ENCODE measurements at regions of chr5 and their contacts with region 1.

Region 1: DNA sequence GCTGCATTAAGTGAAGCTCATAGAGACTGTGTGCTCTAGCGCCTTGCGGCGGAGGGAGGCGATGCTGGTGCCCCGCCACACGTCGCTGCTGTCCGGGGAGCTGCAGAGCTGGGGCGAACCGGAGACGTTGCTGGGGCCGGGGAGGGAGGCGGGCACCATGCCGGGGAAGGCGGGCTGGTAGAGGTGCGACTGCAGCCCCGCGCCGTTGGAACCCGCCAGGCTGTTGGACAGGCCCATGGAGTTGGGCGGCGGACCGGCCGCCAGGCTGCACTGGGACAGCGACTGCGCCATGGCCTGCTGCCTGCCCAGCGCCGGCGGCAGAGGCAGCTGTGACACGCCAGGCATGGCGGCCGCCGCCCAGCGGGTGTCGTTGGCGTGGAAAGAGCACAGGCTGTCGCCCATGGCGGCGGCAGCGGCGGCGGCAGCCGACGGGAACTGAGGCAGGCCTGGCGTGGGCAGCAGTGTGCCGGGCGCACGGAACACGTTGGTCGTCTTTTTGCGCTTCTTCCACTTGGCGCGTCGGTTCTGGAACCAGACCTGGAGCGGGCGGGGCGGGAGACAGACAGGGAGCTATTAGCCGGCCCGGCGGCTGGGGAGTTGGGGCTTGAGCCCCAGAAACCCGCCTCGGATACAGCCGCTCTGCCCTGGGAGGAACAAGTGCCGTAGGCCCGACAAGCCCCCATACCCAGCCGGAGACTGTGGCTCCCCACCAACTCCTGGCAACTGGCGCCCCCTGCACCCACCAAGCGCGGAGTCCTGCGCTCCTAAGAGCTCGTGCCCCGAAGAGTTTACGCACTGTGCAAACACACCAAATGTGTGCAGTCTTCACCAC is 8.0 kb downstream of the OTP start:
- DNase-seq: no peak
- ATAC-seq: peak; percentile 87
- H3K4me3 ChIP-seq: peak overlapping the region; percentile 76
- H3K27ac ChIP-seq: peak overlapping the region; percentile 78
- H3K4me1 ChIP-seq: no peaks in the 10 kb centered on the region; the same call in 1 of the 2 replicates
- H3K27me3 ChIP-seq: peaks cover 0 to under 1% of the 10 kb centered on the region in 2 experiments; a peak in 1 of 4 replicates
- CTCF ChIP-seq: peak; percentile 30 to 57 (median 56); a peak in 5 of 6 replicates
- EP300 ChIP-seq: no peak
- POLR2A ChIP-seq: peak; percentile 90
- RAD21 ChIP-seq: peak; percentile 30; the same call in 1 of the 2 replicates

Region 2: GRCh38 chr5:77155179-77155785 is 475.2 kb before region 1 on chr5:
- CTCF ChIA-PET with region 1: no interaction called
- POLR2A ChIA-PET with region 1: no interaction called
- RAD21 ChIA-PET with region 1: no interaction called
- SMC1A ChIA-PET with region 1: no interaction called
- in situ Hi-C with region 1: no loop called
- intact Hi-C with region 1: no loop called
- DNase-seq: no peak
- ATAC-seq: no peak
- H3K4me3 ChIP-seq: no peak overlapping the region
- H3K27ac ChIP-seq: no peak overlapping the region
- H3K4me1 ChIP-seq: no peaks in the 10 kb centered on the region
- H3K27me3 ChIP-seq: no peaks in the 10 kb centered on the region; a peak in 1 of 4 replicates
- CTCF ChIP-seq: no peak
- EP300 ChIP-seq: no peak
- POLR2A ChIP-seq: no peak
- RAD21 ChIP-seq: no peak

Region 3: GRCh38 chr5:77518304-77518703 is 112.2 kb before region 1 on chr5:
- CTCF ChIA-PET with region 1: interaction called, 5 read pairs
- POLR2A ChIA-PET with region 1: no interaction called
- RAD21 ChIA-PET with region 1: interaction called, 11 read pairs
- SMC1A ChIA-PET with region 1: interaction called, 3 read pairs
- in situ Hi-C with region 1: no loop called
- intact Hi-C with region 1: no loop called
- DNase-seq: no peak
- ATAC-seq: no peak
- H3K4me3 ChIP-seq: no peak overlapping the region
- H3K27ac ChIP-seq: no peak overlapping the region
- H3K4me1 ChIP-seq: no peaks in the 10 kb centered on the region
- H3K27me3 ChIP-seq: no peaks in the 10 kb centered on the region
- CTCF ChIP-seq: peak in 2 of 3 experiments; percentile 20 to 48; a peak in 3 of 6 replicates
- EP300 ChIP-seq: no peak
- POLR2A ChIP-seq: no peak
- RAD21 ChIP-seq: peak; percentile 62

Region 4: DNA sequence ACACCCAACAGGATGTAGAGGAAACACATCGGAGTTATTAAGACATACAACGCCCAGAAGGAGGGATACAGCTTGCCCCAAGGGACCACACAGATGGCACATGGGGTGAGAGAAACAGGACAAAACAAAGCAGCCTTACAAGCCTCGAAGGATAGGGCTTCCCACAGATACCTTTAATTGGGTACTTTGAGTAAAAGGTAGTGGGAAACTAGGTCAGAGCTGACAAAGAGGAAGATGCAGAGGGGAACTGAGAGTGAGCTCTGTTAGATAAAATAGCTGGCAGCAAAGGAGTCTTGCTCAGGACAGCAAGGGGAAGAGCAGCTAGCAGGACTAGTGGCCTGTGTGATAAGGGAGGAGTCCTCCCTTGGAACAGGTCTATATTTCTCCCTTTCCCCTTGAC is 40.1 kb before region 1 on chr5:
- CTCF ChIA-PET with region 1: interaction called, 9 read pairs
- POLR2A ChIA-PET with region 1: interaction called, 13 read pairs
- RAD21 ChIA-PET with region 1: interaction called, 47 read pairs
- SMC1A ChIA-PET with region 1: interaction called, 30 read pairs
- in situ Hi-C with region 1: no loop called
- intact Hi-C with region 1: loop called (anchors 1 kb)
- DNase-seq: peak; percentile 98
- ATAC-seq: peak; percentile 99
- H3K4me3 ChIP-seq: no peak overlapping the region
- H3K27ac ChIP-seq: no peak overlapping the region
- H3K4me1 ChIP-seq: no peaks in the 10 kb centered on the region
- H3K27me3 ChIP-seq: no peaks in the 10 kb centered on the region
- CTCF ChIP-seq: no peak
- EP300 ChIP-seq: peak in 1 of 2 experiments; percentile 77; a peak in 3 of 4 replicates
- POLR2A ChIP-seq: no peak
- RAD21 ChIP-seq: no peak

Region 5: DNA sequence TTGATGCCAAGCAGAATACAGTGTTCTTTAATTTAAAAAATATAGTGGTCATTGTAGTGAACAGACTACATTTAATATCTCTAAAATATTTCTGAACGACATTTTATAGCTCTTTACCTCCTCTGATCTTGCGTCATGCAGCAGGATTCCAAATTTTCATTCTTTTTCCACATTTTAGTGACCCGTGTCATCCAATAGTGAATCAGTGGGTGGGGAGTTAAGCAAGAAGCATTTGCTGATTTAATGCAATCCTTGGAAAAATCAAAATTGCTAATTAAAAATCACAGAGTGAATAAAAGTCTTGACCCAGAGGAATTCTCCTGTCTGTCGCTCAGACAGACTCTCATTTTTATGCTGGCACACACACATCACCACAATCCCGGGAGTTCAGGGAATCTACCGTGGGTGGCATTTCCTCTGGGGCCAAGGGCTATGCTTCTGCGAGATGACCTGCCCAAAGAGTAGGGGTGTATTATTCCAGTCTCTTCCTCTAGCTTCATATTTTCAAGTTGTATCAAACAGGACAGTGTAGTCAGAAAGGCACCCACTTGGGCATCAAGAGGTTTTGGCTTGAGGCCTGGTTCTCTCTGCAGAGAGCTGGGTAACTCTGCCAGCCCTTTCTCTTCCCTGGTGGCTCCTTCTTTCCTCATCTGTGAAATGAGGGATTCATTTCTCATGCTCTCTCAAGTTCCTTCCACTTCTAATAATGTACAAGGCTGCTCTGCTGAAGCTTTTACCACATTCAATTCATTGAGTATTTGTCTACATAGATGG is 32.8 kb after region 1 on chr5:
- CTCF ChIA-PET with region 1: interaction called, 4 read pairs
- POLR2A ChIA-PET with region 1: interaction called, 9 read pairs
- RAD21 ChIA-PET with region 1: interaction called, 14 read pairs
- SMC1A ChIA-PET with region 1: interaction called, 8 read pairs
- in situ Hi-C with region 1: no loop called
- intact Hi-C with region 1: no loop called
- DNase-seq: no peak
- ATAC-seq: peak; percentile 40
- H3K4me3 ChIP-seq: no peak overlapping the region
- H3K27ac ChIP-seq: no peak overlapping the region
- H3K4me1 ChIP-seq: no peaks in the 10 kb centered on the region
- H3K27me3 ChIP-seq: no peaks in the 10 kb centered on the region
- CTCF ChIP-seq: no peak
- EP300 ChIP-seq: no peak
- POLR2A ChIP-seq: no peak
- RAD21 ChIP-seq: no peak

Region 6: DNA sequence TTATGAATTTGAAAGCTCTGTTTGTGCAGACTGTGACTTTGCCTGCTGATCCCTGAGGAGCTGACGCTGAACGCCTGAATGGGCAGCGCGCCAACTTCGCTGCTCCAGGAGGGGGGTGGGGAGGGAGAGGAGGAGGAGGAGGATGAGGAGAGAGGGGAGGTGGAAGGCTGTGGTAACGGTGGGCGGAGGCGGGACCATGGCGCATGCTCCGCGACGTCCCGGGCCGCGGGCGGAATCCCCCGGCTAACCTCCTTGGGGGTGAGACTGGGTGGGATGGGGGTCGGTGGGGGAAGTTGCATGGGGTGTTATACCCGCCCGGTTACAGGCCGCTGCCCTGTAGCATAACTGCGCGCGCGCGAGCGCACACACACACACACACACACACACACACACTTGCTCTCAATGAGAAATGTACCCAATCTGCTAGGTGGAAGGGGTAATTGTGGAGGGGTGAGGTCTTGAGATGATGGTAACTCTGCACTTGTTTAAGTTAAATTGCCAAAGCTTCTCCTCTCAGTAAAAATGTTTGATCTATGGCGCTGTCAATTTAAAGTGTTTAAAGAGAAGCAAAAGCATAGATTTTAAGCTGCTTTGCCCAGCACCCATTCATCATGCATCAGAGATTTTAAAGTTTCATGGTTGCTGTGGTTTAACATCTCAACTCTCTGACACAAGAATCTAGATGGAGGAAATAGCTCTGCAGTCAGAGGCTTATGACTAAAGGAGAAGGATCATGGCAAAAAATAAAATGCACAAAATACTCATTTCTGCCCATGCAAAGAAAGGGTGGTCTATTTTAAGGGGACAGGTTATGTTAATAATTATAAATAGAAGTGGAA is 222.3 kb after region 1 on chr5:
- CTCF ChIA-PET with region 1: no interaction called
- POLR2A ChIA-PET with region 1: interaction called, 4 read pairs
- RAD21 ChIA-PET with region 1: interaction called, 11 read pairs
- SMC1A ChIA-PET with region 1: no interaction called
- in situ Hi-C with region 1: no loop called
- intact Hi-C with region 1: loop called (anchors 5 kb)
- DNase-seq: peak; percentile 80
- ATAC-seq: peak; percentile 94
- H3K4me3 ChIP-seq: peak overlapping the region; percentile 76
- H3K27ac ChIP-seq: peak overlapping the region; percentile 78
- H3K4me1 ChIP-seq: peaks cover 3% of the 10 kb centered on the region; the same call in 1 of the 2 replicates
- H3K27me3 ChIP-seq: no peaks in the 10 kb centered on the region
- CTCF ChIP-seq: no peak
- EP300 ChIP-seq: 0 out of 4 replicates have a peak, but pooled peaks have one; percentile 18 to 30
- POLR2A ChIP-seq: peak; percentile 59
- RAD21 ChIP-seq: no peak; the same call in 1 of the 2 replicates

Region 7: DNA sequence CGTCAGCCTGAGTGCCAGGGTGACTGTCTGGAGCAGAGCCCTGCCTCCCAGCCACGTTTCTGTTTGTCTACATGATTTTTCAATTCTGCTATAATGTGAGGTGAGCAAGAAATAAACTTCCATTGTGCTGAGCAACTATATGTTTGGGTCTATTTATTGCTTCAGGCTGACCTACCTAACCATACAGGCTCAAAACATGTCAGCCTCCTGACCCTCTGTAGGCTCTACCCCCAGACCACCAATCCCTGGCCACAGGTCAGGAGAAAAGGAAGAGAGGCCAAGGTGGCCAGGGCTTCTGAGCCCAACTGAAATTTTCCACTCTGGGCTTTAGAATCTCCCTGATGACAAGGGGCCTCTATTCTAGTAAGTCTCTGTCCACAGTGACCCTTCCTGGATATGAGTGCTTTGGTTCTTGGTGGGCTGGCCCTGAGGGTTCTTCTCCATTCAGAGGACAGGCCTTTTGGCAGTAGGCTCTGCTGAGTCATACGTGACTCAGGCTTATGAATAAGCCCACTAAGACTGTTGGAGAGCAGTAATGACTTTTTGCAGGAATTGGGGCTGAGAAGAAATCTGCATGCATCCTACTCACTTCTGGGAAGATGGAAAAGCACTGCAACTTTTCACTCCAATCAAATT is 262.9 kb after region 1 on chr5:
- CTCF ChIA-PET with region 1: no interaction called
- POLR2A ChIA-PET with region 1: no interaction called
- RAD21 ChIA-PET with region 1: no interaction called
- SMC1A ChIA-PET with region 1: no interaction called
- in situ Hi-C with region 1: no loop called
- intact Hi-C with region 1: no loop called
- DNase-seq: no peak
- ATAC-seq: peak; percentile 59
- H3K4me3 ChIP-seq: no peak overlapping the region
- H3K27ac ChIP-seq: no peak overlapping the region
- H3K4me1 ChIP-seq: no peaks in the 10 kb centered on the region
- H3K27me3 ChIP-seq: no peaks in the 10 kb centered on the region
- CTCF ChIP-seq: no peak
- EP300 ChIP-seq: no peak
- POLR2A ChIP-seq: no peak
- RAD21 ChIP-seq: no peak

Region 8: GRCh38 chr5:77935506-77936364 is 305.3 kb after region 1 on chr5:
- CTCF ChIA-PET with region 1: interaction called, 8 read pairs
- POLR2A ChIA-PET with region 1: no interaction called
- RAD21 ChIA-PET with region 1: interaction called, 5 read pairs
- SMC1A ChIA-PET with region 1: interaction called, 3 read pairs
- in situ Hi-C with region 1: no loop called
- intact Hi-C with region 1: loop called (anchors 2 kb)
- DNase-seq: peak; percentile 44
- ATAC-seq: peak; percentile 86
- H3K4me3 ChIP-seq: no peak overlapping the region
- H3K27ac ChIP-seq: peak overlapping the region; percentile 86
- H3K4me1 ChIP-seq: peaks cover 28% of the 10 kb centered on the region
- H3K27me3 ChIP-seq: no peaks in the 10 kb centered on the region
- CTCF ChIP-seq: no peak
- EP300 ChIP-seq: no peak
- POLR2A ChIP-seq: no peak
- RAD21 ChIP-seq: no peak

Region 9: GRCh38 chr5:78269088-78269703 is 638.7 kb after region 1 on chr5:
- CTCF ChIA-PET with region 1: no interaction called
- POLR2A ChIA-PET with region 1: interaction called, 3 read pairs
- RAD21 ChIA-PET with region 1: interaction called, 10 read pairs
- SMC1A ChIA-PET with region 1: no interaction called
- in situ Hi-C with region 1: no loop called
- intact Hi-C with region 1: no loop called
- DNase-seq: no peak
- ATAC-seq: peak; percentile 84
- H3K4me3 ChIP-seq: no peak overlapping the region
- H3K27ac ChIP-seq: no peak overlapping the region
- H3K4me1 ChIP-seq: peaks cover 10% of the 10 kb centered on the region; the same call in 1 of the 2 replicates
- H3K27me3 ChIP-seq: no peaks in the 10 kb centered on the region
- CTCF ChIP-seq: peak in 2 of 3 experiments; percentile 17 to 42; a peak in 4 of 6 replicates
- EP300 ChIP-seq: no peak
- POLR2A ChIP-seq: no peak
- RAD21 ChIP-seq: peak; percentile 42; the same call in 1 of the 2 replicates